ENCODE measurements at regions of chr11 and their contacts with region 1.

Region 1: GRCh38 chr11:62665075-62665598 is at the starts of genes C11orf98 and CSKMT:
- DNase-seq: peak; percentile 97
- H3K4me3 Mint-ChIP-seq: peak within 1 kb of the TSS; percentile 98
- H3K27ac Mint-ChIP-seq: peak within 1 kb of the TSS; percentile 81
- H3K4me1 Mint-ChIP-seq: peaks cover 33% of the 10 kb centered on the region
- H3K27me3 Mint-ChIP-seq: no peaks in the 10 kb centered on the region
- total RNA-seq, gene C11orf98: 146 and 151 TPM in 2 replicates
- total RNA-seq, gene CSKMT: 65.0 and 69.4 TPM in 2 replicates

Region 2: GRCh38 chr11:62573592-62574362 is 91.4 kb before region 1 on chr11 and contains the start of gene EEF1G:
- intact Hi-C with region 1: no loop called
- DNase-seq: peak; percentile 99
- H3K4me3 Mint-ChIP-seq: peak within 1 kb of the TSS; percentile 98
- H3K27ac Mint-ChIP-seq: peak within 1 kb of the TSS; percentile 92
- H3K4me1 Mint-ChIP-seq: peaks cover 37% of the 10 kb centered on the region
- H3K27me3 Mint-ChIP-seq: no peaks in the 10 kb centered on the region
- total RNA-seq, gene EEF1G: 1,154 and 1,169 TPM in 2 replicates

Region 3: GRCh38 chr11:62612366-62613290 is 52.5 kb before region 1 on chr11 and contains the starts of genes EML3 and ROM1:
- intact Hi-C with region 1: loop called (anchors 2 kb)
- DNase-seq: peak; percentile 85
- H3K4me3 Mint-ChIP-seq: peak within 1 kb of the TSS; percentile 96
- H3K27ac Mint-ChIP-seq: peak within 1 kb of the TSS; percentile 97
- H3K4me1 Mint-ChIP-seq: peaks cover 32% of the 10 kb centered on the region
- H3K27me3 Mint-ChIP-seq: no peaks in the 10 kb centered on the region
- total RNA-seq, gene EML3: 164 and 167 TPM in 2 replicates
- total RNA-seq, gene ROM1: 2.5 and 3.2 TPM in 2 replicates

Region 4: GRCh38 chr11:62621567-62622470 is 43.3 kb before region 1 on chr11 and contains the start of gene B3GAT3:
- intact Hi-C with region 1: loop called (anchors 1 kb)
- DNase-seq: peak; percentile 96
- H3K4me3 Mint-ChIP-seq: peak within 1 kb of the TSS; percentile 95
- H3K27ac Mint-ChIP-seq: peak within 1 kb of the TSS; percentile 96
- H3K4me1 Mint-ChIP-seq: peaks cover 25% of the 10 kb centered on the region
- H3K27me3 Mint-ChIP-seq: no peaks in the 10 kb centered on the region
- total RNA-seq, gene B3GAT3: 93.8 and 94.3 TPM in 2 replicates

Region 5: DNA sequence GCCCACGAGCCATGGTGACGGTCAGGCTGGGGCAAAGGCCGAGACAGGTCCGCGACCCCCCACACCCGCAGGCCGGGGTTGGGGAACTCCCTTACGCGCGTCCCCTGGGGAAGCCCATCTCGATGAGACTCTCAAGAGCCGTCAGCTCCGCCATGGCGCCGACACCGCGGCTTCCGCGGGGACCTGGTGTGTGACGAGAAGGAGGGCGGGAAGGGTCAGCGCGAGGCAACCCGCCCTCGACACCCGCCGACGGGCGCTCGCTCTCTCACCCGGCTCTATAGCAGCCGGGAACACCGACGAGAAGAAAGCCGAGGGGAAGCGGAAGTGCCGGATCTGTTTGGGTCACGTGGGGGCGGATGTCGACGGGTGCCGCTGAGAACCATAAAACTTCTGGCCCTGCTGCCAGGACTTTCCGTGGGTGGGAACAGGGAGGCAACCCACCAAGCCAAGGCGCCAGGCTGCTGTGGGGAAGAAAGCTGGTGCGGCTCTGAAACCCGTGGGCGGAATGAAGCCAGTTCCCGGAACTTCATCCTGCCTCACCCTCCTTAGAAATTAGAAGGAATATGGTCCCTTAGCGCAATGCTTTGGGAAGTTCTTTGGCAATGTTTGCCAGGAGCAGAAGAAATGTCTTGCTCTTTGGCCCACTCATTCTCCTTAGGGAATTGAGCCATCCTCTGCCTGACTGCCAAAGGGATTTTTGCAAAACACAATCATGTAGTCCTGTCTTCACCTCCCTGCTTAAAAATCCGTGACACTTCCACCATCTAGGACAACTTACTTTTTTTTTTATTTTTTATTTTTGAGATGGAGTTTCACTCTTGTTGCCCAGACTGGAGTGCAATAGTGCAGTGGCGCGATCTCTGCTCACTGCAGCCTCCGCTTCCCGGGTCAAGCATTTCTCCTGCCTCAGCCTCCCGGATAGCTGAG is 13.9 kb after region 1 on chr11 and contains the start of gene UBXN1:
- intact Hi-C with region 1: loop called (anchors 2 kb)
- DNase-seq: peak; percentile 79
- H3K4me3 Mint-ChIP-seq: peak within 1 kb of the TSS; percentile 80
- H3K27ac Mint-ChIP-seq: peak within 1 kb of the TSS; percentile 82
- H3K4me1 Mint-ChIP-seq: peaks cover 36% of the 10 kb centered on the region
- H3K27me3 Mint-ChIP-seq: no peaks in the 10 kb centered on the region
- total RNA-seq, gene UBXN1: 125 and 128 TPM in 2 replicates